Activated naive CD4-positive, alpha-beta T cell treated with anti-CD3 and anti-CD28 coated beads for 36 hours (primary cell): ENCODE measurements at regions of chr7 and their contacts with region 1.

Region 1: DNA sequence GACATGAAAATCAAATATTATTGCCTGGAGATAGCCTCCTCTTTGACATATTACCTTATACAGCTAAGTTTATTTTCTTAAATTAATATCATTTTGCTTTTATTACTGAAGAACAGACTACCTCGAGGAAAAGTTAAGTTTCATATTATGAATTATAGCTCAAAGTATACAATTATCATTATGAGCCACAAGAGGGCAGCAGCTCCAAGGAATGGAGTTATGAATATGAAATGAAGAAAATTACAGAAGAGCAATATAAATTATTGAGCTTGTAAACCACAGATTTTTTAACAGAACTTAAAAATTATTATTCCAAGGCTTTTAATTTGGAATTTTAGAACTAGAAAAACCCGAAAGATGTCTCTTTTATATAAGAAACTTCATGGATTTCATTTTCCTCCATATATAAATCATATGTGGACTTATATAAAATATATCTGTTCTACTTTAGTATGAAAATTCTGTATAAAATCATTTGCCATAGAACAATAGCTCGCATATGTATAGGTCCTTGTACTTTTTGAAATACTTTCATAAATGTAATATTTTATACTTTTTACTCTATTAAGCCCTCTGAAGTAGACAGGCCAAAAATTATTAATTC is 40.1 kb downstream of the IQUB start:
- DNase-seq: peak; percentile 42
- H3K4me3 Mint-ChIP-seq: no peak overlapping the region
- H3K27ac Mint-ChIP-seq: no peak overlapping the region
- H3K4me1 Mint-ChIP-seq: no peaks in the 10 kb centered on the region
- H3K27me3 Mint-ChIP-seq: peaks cover 7% of the 10 kb centered on the region

Region 2: GRCh38 chr7:123534383-123535260 is 40.3 kb after region 1 on chr7 and contains the start of gene IQUB:
- CTCF ChIA-PET with region 1: interaction called, 5 read pairs
- intact Hi-C with region 1: loop called (anchors 1 kb)
- DNase-seq: peak; percentile 99
- H3K4me3 Mint-ChIP-seq: peak within 1 kb of the TSS; percentile 92
- H3K27ac Mint-ChIP-seq: peak within 1 kb of the TSS; percentile 82
- H3K4me1 Mint-ChIP-seq: peaks cover 27% of the 10 kb centered on the region
- H3K27me3 Mint-ChIP-seq: peaks cover 18% of the 10 kb centered on the region
- total RNA-seq, gene IQUB: 0.07 TPM in 1 of 2 experiments, not detected in the other

Region 3: DNA sequence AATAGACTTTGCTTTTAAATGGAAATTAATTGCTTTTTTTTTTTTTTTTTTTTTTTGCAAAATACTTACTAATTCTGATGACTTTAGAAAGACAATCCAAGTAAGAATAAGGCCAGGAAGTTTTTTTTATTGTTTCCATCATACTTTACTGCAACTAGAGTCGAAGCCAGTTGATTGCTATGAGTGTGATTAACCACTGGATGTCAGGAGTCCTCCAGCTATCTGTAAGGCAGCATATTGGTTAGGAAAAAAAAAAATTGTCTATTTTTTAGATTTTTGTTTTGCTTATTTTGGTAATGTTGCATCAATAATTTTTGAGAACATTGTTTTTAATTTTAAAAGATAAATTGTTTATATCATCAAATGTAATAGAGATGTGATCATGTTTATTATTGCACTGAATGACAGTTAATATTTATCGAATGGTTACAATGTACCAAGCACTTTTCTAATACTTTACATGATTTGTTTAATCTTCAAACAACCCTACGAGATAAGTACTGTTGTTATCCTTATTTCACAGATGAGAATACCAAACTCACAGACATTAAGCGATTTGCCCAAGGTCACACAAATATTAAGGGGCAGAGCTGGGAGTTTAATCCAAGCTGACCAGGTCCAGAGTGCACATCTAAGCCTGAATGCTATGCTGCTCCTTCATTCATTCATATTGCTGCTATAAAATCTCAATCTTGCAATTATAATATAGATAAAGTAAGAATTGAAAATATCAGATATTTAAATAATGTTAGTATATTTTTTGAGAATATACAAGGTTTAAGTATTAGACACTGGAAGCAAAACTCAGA is 141.5 kb after region 1 on chr7:
- CTCF ChIA-PET with region 1: no interaction called
- intact Hi-C with region 1: loop called (anchors 5 kb)
- DNase-seq: no peak
- H3K4me3 Mint-ChIP-seq: no peak overlapping the region
- H3K27ac Mint-ChIP-seq: no peak overlapping the region
- H3K4me1 Mint-ChIP-seq: no peaks in the 10 kb centered on the region
- H3K27me3 Mint-ChIP-seq: peaks cover 17% of the 10 kb centered on the region

Region 4: GRCh38 chr7:123705211-123705901 is 211.1 kb after region 1 on chr7:
- CTCF ChIA-PET with region 1: interaction called, 3 read pairs
- intact Hi-C with region 1: loop called (anchors 1 kb)
- DNase-seq: no peak
- H3K4me3 Mint-ChIP-seq: no peak overlapping the region
- H3K27ac Mint-ChIP-seq: no peak overlapping the region
- H3K4me1 Mint-ChIP-seq: peaks cover 1% of the 10 kb centered on the region
- H3K27me3 Mint-ChIP-seq: no peaks in the 10 kb centered on the region

Region 5: DNA sequence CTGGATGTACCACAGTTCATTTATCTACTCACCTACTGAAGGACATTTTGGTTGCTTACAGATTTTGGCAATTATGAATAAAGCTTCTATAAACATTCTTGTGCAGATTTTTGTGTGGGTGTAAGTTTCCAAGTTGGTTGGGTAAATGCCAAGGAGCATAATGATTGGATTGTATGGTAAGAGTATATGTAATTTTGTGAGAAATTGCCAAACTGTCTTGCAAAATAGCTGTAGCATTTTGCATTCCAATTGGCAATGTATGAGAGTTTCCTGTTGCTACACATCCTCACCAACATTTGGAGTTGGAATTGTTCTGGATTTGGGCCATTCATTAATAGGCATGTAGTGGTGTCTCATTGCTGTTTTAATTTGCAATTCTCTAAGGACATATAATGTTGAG is 316.8 kb after region 1 on chr7:
- CTCF ChIA-PET with region 1: no interaction called
- intact Hi-C with region 1: no loop called
- DNase-seq: no peak
- H3K4me3 Mint-ChIP-seq: no peak overlapping the region
- H3K27ac Mint-ChIP-seq: no peak overlapping the region
- H3K4me1 Mint-ChIP-seq: no peaks in the 10 kb centered on the region
- H3K27me3 Mint-ChIP-seq: no peaks in the 10 kb centered on the region

Region 6: DNA sequence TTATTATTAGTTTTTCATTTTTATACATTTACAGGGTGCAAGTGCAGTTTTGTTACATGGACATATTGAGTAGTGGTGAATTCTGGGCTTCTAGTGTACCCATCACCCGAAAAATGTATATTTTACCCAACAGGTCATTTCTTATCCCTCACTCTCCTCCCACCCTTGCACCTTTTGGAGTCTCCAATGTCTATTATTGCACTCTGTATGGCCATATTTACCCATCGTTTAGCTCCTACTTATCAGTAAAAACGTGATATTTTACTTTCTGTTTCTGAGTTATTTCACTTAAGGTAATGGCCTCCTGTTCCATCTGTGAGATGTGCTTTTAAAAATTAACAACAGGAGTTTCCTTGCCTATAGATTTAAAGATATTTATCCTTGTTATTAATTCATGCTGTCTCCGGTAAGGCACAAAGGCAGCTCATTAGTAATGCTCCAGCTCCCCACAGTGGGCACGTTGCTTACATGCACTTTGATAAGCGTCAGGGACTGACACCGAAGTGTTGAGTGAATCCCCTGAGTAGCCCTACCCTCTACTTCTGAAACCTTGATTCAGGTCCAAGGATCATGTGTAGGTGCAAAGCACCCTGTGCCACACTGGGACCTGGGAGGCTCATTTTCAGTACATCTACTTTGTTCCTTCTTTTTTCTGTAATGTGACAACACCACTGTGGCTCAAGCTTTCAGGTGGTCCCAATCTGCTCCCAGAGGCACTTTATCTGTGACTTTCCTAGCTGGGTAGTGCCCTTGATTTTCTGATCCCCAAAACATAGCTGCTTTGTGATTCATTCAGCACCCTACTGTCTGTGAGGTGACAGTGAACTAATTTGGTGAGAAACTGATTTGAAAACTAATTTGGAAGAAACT is 377.9 kb after region 1 on chr7:
- CTCF ChIA-PET with region 1: interaction called, 20 read pairs
- intact Hi-C with region 1: loop called (anchors 1 kb)
- DNase-seq: peak; percentile 67
- H3K4me3 Mint-ChIP-seq: no peak overlapping the region
- H3K27ac Mint-ChIP-seq: no peak overlapping the region
- H3K4me1 Mint-ChIP-seq: no peaks in the 10 kb centered on the region
- H3K27me3 Mint-ChIP-seq: peaks cover 3% of the 10 kb centered on the region